Heart left ventricle (tissue), 16 donors: ENCODE measurements at regions of chr13 and their contacts with region 1.

Region 1: DNA sequence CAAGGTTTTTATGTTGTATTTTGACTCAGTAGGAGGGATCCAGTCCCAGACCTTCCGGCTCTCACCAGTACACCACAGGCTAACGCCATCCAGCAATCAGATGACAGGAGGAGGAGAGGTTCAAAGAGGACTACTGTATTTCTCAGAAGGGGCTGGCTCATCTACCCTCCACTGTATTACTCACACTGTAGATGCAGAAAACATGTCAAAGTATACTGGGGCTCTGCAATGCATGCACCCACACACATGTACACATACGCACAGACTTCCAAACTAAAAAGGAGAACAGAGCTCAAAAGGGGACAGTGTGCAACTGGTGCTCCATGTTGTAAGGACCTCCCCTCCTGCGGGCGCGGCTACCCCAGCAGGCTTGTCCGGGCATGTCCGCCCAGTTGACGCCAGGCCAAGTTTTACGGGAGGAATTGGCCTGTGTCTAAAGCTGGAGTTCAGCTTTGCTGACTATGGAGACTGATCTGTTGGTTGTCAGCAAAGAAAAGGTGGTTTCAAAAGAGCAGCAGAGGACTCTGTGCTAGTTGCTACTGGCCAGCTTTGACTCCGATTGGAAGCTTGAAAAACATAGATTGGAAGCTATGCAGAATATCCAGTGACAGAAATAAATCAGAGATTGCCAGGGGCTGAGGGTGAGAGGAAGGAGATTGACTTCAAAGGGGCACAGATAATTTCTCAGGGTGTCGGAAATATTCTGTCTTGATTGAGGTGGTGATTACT is 314.2 kb downstream of the DLEU7 start:
- DNase-seq: peak; percentile 87 to 95 (median 91)
- ATAC-seq: peak; percentile 86 to 96 (median 94)
- H3K4me3 ChIP-seq: peak overlapping the region in 10 of 12 donors; percentile 6 to 41 (median 26)
- H3K27ac ChIP-seq: peak overlapping the region; percentile 50 to 85 (median 76)
- H3K4me1 ChIP-seq: peaks cover 5 to 51% (median 28%) of the 10 kb centered on the region in 12 donors
- H3K27me3 ChIP-seq: no peaks in the 10 kb centered on the region
- CTCF ChIP-seq: no peak
- POLR2A ChIP-seq: no peak

Region 2: GRCh38 chr13:50081679-50082425 is 447.5 kb before region 1 on chr13:
- intact Hi-C with region 1: loop called in 9 of 10 experiments (anchors 2 to 10 kb)
- DNase-seq: peak; percentile 97 to 98 (median 98)
- ATAC-seq: peak; percentile 95 to 97 (median 96)
- H3K4me3 ChIP-seq: peak overlapping the region; percentile 41 to 80 (median 69)
- H3K27ac ChIP-seq: peak overlapping the region in 11 of 12 donors; percentile 67 to 88 (median 78)
- H3K4me1 ChIP-seq: peaks cover 0 to 64% (median 26%) of the 10 kb centered on the region in 12 donors
- H3K27me3 ChIP-seq: no peaks in the 10 kb centered on the region
- CTCF ChIP-seq: peak in 2 of 12 donors; percentile 14 to 21
- POLR2A ChIP-seq: no peak

Region 3: GRCh38 chr13:50170447-50171037 is 358.8 kb before region 1 on chr13:
- intact Hi-C with region 1: loop called in 1 of 10 experiments (anchors 10 kb)
- DNase-seq: no peak
- ATAC-seq: no peak
- H3K4me3 ChIP-seq: no peak overlapping the region
- H3K27ac ChIP-seq: no peak overlapping the region
- H3K4me1 ChIP-seq: peaks cover 0 to 4% (median 0%) of the 10 kb centered on the region in 12 donors
- H3K27me3 ChIP-seq: no peaks in the 10 kb centered on the region
- CTCF ChIP-seq: peak in 9 of 12 donors; percentile 24 to 56 (median 47)
- POLR2A ChIP-seq: no peak

Region 4: DNA sequence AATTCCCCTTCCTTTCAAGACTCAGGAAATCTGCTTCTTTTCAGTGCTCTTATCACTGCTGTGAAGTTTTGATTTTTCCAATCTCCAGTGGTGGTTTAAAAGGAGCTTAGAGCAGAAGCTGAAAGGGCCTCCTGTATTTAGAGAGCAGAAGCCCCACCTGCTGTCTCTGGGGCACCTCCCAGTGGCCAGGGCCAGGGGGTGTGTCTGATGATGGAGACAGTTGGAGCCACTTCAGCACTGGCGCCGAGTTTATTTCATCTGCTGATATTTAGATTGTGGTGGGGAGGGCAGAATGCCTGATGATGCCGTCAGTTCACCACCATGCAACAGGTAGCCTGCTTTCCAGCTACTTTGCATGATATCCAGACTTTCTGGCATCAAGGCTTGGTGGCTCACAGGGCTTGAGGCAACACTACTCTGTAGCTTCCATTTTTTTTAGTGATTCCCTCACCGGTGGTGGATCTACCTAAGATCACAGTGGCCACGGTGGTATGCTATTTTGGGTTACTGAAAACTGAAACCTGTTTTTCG is 142.2 kb before region 1 on chr13:
- intact Hi-C with region 1: loop called in 2 of 10 experiments (anchors 5 to 10 kb)
- DNase-seq: peak; percentile 61 to 77 (median 68)
- ATAC-seq: peak; percentile 89 to 96 (median 95)
- H3K4me3 ChIP-seq: peak overlapping the region in 10 of 12 donors; percentile 10 to 50 (median 37)
- H3K27ac ChIP-seq: peak overlapping the region in 11 of 12 donors; percentile 33 to 86 (median 69)
- H3K4me1 ChIP-seq: peaks cover 0 to 20% (median 2%) of the 10 kb centered on the region in 12 donors
- H3K27me3 ChIP-seq: no peaks in the 10 kb centered on the region
- CTCF ChIP-seq: peak in 11 of 12 donors; percentile 8 to 53 (median 23)
- POLR2A ChIP-seq: no peak

Region 5: GRCh38 chr13:50911937-50912795 is 382.8 kb after region 1 on chr13:
- intact Hi-C with region 1: loop called in 6 of 10 experiments (anchors 5 to 10 kb)
- DNase-seq: peak; percentile 84 to 90 (median 86)
- ATAC-seq: peak; percentile 45 to 60 (median 52)
- H3K4me3 ChIP-seq: peak overlapping the region in 1 of 12 donors; percentile 70
- H3K27ac ChIP-seq: peak overlapping the region in 8 of 12 donors; percentile 1 to 93 (median 66)
- H3K4me1 ChIP-seq: peaks cover 0 to 70% (median 46%) of the 10 kb centered on the region in 12 donors
- H3K27me3 ChIP-seq: no peaks in the 10 kb centered on the region
- CTCF ChIP-seq: peak; percentile 77 to 91 (median 86)
- POLR2A ChIP-seq: no peak